Naive thymus-derived CD4-positive, alpha-beta T cell (primary cell): ENCODE measurements at regions of chr9 and their contacts with region 1.

Region 1: DNA sequence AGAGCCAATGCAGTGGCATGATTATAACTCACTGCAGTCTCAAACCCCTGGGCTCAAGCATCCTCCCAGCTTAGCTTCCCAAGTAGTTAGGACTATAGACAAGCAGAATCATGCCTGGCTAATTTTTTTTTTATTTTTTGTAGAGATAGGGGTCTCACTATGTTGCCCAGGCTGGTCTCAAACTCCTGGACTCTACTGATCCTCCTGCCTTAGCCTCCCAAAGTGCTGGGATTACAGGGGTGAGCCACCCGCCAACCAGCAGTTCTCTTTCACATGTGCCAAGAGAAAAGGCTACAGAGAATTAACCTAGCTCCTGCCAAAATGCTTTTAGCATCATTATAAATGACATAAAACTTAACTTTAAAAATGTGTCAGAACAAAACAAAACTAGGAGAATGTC is 8.1 kb downstream of the AK3 start:
- DNase-seq: no peak
- ATAC-seq: no peak
- H3K4me3 ChIP-seq: no peak overlapping the region
- H3K4me3 Mint-ChIP-seq: peak overlapping the region in 1 of 10 donors; percentile 34
- H3K27ac ChIP-seq: no peak overlapping the region
- H3K27ac Mint-ChIP-seq: peak overlapping the region in 1 of 9 donors; percentile 78
- H3K4me1 ChIP-seq: no peaks in the 10 kb centered on the region
- H3K4me1 Mint-ChIP-seq: peaks cover 24 to 59% (median 50%) of the 10 kb centered on the region in 7 donors
- H3K27me3 ChIP-seq: no peaks in the 10 kb centered on the region
- H3K27me3 Mint-ChIP-seq: no peaks in the 10 kb centered on the region

Region 2: GRCh38 chr9:4713849-4714248 is 19.0 kb before region 1 on chr9:
- CTCF ChIA-PET with region 1: no interaction called
- POLR2A ChIA-PET with region 1: no interaction called
- intact Hi-C with region 1: loop called in 1 of 2 experiments (anchors 2 kb)
- DNase-seq: no peak
- ATAC-seq: peak; percentile 44
- H3K4me3 ChIP-seq: no peak overlapping the region
- H3K4me3 Mint-ChIP-seq: no peak overlapping the region
- H3K27ac ChIP-seq: no peak overlapping the region
- H3K27ac Mint-ChIP-seq: peak overlapping the region in 5 of 9 donors; percentile 4 to 29 (median 18)
- H3K4me1 ChIP-seq: no peaks in the 10 kb centered on the region
- H3K4me1 Mint-ChIP-seq: peaks cover 0 to 3% (median 0%) of the 10 kb centered on the region in 7 donors
- H3K27me3 ChIP-seq: no peaks in the 10 kb centered on the region
- H3K27me3 Mint-ChIP-seq: no peaks in the 10 kb centered on the region